ENCODE measurements at regions of chr12 and their contacts with region 1.

Region 1: GRCh38 chr12:31651893-31652521 is 7.5 kb upstream of the ETFBKMT start:
- DNase-seq: no peak
- ATAC-seq: no peak
- H3K4me3 Mint-ChIP-seq: peak overlapping the region; percentile 73
- H3K27ac Mint-ChIP-seq: peak overlapping the region; percentile 98
- H3K4me1 Mint-ChIP-seq: peaks cover 11% of the 10 kb centered on the region
- H3K27me3 Mint-ChIP-seq: no peaks in the 10 kb centered on the region

Region 2: GRCh38 chr12:31578632-31579031 is 73.4 kb before region 1 on chr12:
- POLR2A ChIA-PET with region 1: no interaction called
- DNase-seq: no peak
- ATAC-seq: no peak
- H3K4me3 Mint-ChIP-seq: no peak overlapping the region
- H3K27ac Mint-ChIP-seq: no peak overlapping the region
- H3K4me1 Mint-ChIP-seq: no peaks in the 10 kb centered on the region
- H3K27me3 Mint-ChIP-seq: peaks cover 5% of the 10 kb centered on the region

Region 3: DNA sequence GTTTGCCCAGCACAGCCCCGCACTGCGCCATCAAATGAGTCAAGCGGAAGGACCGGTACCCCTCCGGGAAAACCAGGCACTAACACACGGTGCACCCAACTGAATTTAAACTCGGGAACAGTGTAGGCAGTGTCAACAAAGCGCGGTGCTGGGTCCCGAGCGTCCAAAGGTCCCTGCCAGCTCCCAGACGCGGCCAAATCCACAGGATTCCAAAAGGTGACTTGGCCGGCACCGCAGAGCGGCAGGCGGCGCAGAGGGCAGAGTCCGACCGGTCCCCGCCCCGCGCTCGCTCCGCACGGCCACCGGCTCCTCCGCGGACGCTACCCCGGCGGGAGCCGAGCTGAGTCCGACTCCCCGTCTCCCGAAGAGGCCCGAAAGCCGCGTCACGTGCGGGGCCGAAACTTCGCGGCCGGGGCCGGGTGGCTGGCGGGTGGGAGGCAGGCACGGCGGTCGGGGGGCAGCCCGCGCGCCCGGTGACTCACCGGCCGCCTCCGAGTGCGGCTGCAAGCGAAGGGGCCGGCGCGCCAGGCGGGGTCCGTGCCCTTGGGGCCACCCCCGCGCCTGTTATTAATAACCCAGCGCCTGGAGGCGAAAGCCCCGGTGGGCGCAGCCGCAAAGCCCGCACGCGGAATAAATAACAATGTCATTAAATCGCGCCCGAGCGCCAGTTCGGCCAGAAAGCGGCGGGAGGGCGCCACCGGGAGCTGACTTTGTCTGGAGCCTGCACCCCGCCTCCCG is 61.9 kb before region 1 on chr12:
- POLR2A ChIA-PET with region 1: no interaction called
- DNase-seq: peak; percentile 48
- ATAC-seq: peak; percentile 37
- H3K4me3 Mint-ChIP-seq: peak overlapping the region; percentile 67
- H3K27ac Mint-ChIP-seq: no peak overlapping the region
- H3K4me1 Mint-ChIP-seq: peaks cover 8% of the 10 kb centered on the region
- H3K27me3 Mint-ChIP-seq: peaks cover 64% of the 10 kb centered on the region

Region 4: GRCh38 chr12:31612819-31613218 is 39.2 kb before region 1 on chr12:
- POLR2A ChIA-PET with region 1: no interaction called
- DNase-seq: no peak
- ATAC-seq: no peak
- H3K4me3 Mint-ChIP-seq: no peak overlapping the region
- H3K27ac Mint-ChIP-seq: no peak overlapping the region
- H3K4me1 Mint-ChIP-seq: no peaks in the 10 kb centered on the region
- H3K27me3 Mint-ChIP-seq: no peaks in the 10 kb centered on the region

Region 5: DNA sequence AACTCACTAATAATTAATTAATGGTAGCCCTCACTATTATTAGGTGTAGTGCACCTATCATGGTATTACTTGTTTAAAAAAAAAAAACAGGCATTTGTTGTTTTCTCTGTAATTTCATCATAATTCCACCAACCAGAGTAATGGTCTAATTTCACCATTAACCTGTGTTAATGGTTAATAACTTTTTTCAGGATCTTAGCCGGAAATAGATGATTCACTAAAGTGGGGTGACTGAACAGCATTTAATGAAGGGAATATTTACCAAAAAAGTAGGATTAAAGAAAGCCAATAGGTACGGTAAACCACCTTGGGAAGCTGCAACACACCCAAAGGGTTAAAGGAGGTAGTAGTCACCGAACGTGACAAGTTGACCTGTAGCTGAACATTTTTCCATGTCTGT is 20.5 kb after region 1 on chr12:
- POLR2A ChIA-PET with region 1: no interaction called
- DNase-seq: no peak
- ATAC-seq: no peak
- H3K4me3 Mint-ChIP-seq: no peak overlapping the region
- H3K27ac Mint-ChIP-seq: no peak overlapping the region
- H3K4me1 Mint-ChIP-seq: no peaks in the 10 kb centered on the region
- H3K27me3 Mint-ChIP-seq: no peaks in the 10 kb centered on the region

Region 6: DNA sequence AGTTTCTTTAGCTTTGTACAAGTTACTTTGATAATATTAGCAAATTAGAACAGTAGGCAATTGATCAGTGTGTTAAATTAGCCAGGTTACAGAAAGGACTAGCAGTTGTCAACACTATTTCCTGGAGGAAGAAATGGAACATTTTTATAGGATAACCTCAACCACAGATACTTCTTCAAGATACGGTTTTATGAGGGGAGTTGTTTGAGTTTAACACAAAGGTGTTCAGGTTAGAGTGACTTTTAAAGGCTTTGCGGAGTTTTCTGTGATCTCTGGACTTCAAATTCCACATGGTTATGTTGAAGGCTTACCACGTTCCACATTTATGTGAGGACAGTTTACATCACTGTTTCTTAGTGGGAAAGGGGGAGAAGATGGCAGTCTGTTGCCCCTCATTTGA is 1084.4 kb after region 1 on chr12:
- POLR2A ChIA-PET with region 1: interaction called, 10 read pairs
- DNase-seq: no peak
- ATAC-seq: no peak
- H3K4me3 Mint-ChIP-seq: no peak overlapping the region
- H3K27ac Mint-ChIP-seq: no peak overlapping the region
- H3K4me1 Mint-ChIP-seq: peaks cover 3% of the 10 kb centered on the region
- H3K27me3 Mint-ChIP-seq: no peaks in the 10 kb centered on the region